ENCODE measurements at regions of chr19 and their contacts with region 1.

Region 1: DNA sequence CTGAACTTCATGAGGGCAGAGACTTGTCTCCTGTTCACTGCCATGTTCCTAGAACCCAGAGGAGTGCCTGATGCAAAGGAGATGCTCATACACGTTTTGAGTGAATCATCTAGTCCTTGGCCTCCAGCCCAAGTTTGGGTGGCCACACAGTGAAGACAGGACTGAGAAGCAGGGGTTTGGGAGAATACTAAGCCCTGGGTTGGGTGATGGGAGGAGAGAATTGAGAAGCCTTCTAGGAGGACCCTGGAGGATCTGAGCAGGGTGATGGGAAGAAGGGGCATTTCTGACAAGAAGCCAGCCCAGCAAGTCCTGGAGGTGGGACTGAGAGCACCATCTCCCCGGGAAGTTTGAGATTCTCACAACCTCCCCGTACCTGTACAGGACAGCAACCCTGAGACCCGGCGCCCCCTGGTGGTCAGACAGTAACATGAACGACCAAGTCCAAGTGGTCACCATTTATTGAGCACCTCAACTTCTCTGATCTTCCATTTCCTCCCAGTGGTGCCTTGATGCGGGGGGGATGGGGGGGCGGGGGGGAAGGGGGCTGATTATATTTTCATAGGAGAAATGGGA is 11.0 kb downstream of the CTU1 start:
- DNase-seq: peak; percentile 71 to 77 (median 75)
- ATAC-seq: peak; percentile 57
- H3K4me3 ChIP-seq: no peak overlapping the region
- H3K27ac ChIP-seq: no peak overlapping the region
- H3K4me1 ChIP-seq: peaks cover 25% of the 10 kb centered on the region
- H3K27me3 ChIP-seq: no peaks in the 10 kb centered on the region
- CTCF ChIP-seq: peak; percentile 45 to 76 (median 63)
- POLR2A ChIP-seq: no peak

Region 2: GRCh38 chr19:50933640-50934039 is 163.6 kb before region 1 on chr19:
- intact Hi-C with region 1: loop called (anchors 10 kb)
- DNase-seq: no peak
- ATAC-seq: no peak
- H3K4me3 ChIP-seq: no peak overlapping the region
- H3K27ac ChIP-seq: no peak overlapping the region
- H3K4me1 ChIP-seq: peaks cover 3% of the 10 kb centered on the region
- H3K27me3 ChIP-seq: peaks cover 0 to 8% of the 10 kb centered on the region in 2 donors
- CTCF ChIP-seq: no peak
- POLR2A ChIP-seq: no peak

Region 3: GRCh38 chr19:51020988-51021651 is 76.1 kb before region 1 on chr19:
- intact Hi-C with region 1: loop called (anchors 5 kb)
- DNase-seq: peak; percentile 41 to 66 (median 60)
- ATAC-seq: peak; percentile 57
- H3K4me3 ChIP-seq: no peak overlapping the region
- H3K27ac ChIP-seq: peak overlapping the region in 1 of 4 donors; percentile 19
- H3K4me1 ChIP-seq: peaks cover 55% of the 10 kb centered on the region
- H3K27me3 ChIP-seq: peaks cover 0 to 5% of the 10 kb centered on the region in 2 donors
- CTCF ChIP-seq: peak; percentile 42 to 82 (median 71)
- POLR2A ChIP-seq: no peak

Measured in body of pancreas (tissue), 4 donors.